Natural killer cell (primary cell): ENCODE measurements at regions of chr15 and their contacts with region 1.

Region 1: DNA sequence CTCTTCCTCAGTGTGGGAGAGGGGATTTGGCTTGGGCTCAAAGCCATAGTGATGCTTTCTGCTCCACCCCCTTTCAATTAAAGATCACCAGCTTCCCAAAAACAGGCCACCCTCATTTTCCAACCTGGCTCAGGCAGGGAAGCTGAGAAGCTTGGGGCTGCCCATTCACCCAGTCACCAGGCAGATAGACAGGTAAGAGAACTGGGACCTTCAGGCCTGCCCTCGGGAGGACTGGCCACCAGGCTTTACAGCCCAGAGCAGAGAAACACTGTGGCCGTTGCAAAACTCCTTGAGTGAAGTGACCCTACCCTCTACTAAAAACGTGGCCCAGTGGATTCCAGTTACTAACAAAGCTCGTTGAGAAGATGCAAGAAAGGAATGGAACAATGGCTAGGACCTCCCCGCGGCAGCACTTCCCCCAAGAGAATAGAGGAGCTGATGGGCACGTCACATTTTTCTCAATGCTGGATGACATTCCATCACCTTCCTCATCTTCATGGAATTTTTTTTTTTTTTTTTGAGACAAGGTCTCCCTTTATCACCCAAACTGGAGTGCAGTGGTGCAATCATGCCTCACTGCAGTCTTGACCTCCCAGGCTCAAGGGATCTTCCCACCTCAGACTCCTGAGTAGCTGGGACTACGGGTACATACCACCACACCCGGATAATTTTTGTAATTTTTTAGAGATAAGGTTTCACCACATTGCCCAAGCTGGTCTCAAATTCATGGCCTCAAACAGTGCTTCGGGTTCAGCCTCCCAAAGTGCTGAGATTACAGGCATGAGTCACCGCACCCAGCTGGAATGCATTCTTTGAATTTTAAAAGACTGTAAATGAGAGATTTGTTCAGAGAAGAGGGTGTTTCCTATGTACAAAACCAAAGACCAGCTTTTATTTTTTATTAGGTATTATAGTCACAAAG is 37.9 kb downstream of the LIPC start:
- DNase-seq: no peak
- ATAC-seq: no peak
- H3K4me3 ChIP-seq: no peak overlapping the region
- H3K4me3 Mint-ChIP-seq: no peak overlapping the region
- H3K27ac ChIP-seq: no peak overlapping the region
- H3K27ac Mint-ChIP-seq: peak overlapping the region in 1 of 2 donors; percentile 47
- H3K4me1 ChIP-seq: peaks cover 35% of the 10 kb centered on the region
- H3K4me1 Mint-ChIP-seq: peaks cover 35 to 43% of the 10 kb centered on the region in 2 donors
- H3K27me3 ChIP-seq: no peaks in the 10 kb centered on the region
- H3K27me3 Mint-ChIP-seq: no peaks in the 10 kb centered on the region
- CTCF ChIP-seq: no peak

Region 2: GRCh38 chr15:58597943-58598828 is 128.5 kb after region 1 on chr15:
- intact Hi-C with region 1: loop called (anchors 5 kb)
- DNase-seq: no peak
- ATAC-seq: peak; percentile 86 to 94 (median 88)
- H3K4me3 ChIP-seq: no peak overlapping the region
- H3K4me3 Mint-ChIP-seq: peak overlapping the region; percentile 53
- H3K27ac ChIP-seq: peak overlapping the region; percentile 84
- H3K27ac Mint-ChIP-seq: peak overlapping the region; percentile 93 to 95
- H3K4me1 ChIP-seq: peaks cover 6% of the 10 kb centered on the region
- H3K4me1 Mint-ChIP-seq: peaks cover 13 to 22% of the 10 kb centered on the region in 2 donors
- H3K27me3 ChIP-seq: no peaks in the 10 kb centered on the region
- H3K27me3 Mint-ChIP-seq: no peaks in the 10 kb centered on the region
- CTCF ChIP-seq: no peak